GM12878 (cell line): ENCODE measurements at regions of chr6 and their contacts with region 1.

Region 1: DNA sequence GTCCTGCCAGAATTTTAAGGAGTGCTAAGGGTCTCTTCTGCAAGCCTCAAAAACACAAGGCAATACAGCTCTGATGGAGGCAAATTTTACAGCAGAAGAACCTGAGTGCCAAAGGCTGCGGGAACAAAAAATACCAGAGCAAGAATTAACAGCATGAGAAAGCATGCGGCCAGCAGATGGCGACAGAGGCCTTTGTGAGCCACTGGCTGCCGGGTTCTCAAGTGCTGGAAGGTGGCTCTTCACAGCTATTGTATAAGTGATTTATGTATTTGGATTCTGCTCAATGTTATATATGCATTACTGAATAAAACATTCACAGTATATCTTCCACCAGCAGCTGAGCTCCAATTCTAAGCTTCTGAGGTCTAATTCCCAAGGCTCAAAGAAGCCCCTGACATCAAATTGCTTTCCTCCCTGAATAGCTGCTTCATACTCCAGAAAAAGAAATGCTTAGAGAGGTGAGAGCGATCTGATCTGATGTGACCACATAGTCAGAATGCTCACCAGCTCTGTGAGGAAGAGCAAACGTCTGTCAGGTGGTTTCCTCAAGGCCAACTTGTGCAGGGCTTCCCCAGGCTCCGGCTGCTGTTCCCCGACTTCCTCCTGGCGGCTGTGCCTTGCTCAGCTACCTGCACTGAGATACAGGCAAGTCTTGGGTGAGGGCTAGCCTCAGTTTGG is 58.6 kb downstream of the PPP1R3G start:
- DNase-seq: peak; percentile 27
- ATAC-seq: peak; percentile 93
- H3K4me3 ChIP-seq: no peak overlapping the region
- H3K27ac ChIP-seq: no peak overlapping the region
- H3K4me1 ChIP-seq: peaks cover 11% of the 10 kb centered on the region
- H3K27me3 ChIP-seq: no peaks in the 10 kb centered on the region
- CTCF ChIP-seq: peak; percentile 82 to 99 (median 88); a peak in 5 of 6 replicates
- EP300 ChIP-seq: no peak
- POLR2A ChIP-seq: no peak
- RAD21 ChIP-seq: peak; percentile 98

Region 2: DNA sequence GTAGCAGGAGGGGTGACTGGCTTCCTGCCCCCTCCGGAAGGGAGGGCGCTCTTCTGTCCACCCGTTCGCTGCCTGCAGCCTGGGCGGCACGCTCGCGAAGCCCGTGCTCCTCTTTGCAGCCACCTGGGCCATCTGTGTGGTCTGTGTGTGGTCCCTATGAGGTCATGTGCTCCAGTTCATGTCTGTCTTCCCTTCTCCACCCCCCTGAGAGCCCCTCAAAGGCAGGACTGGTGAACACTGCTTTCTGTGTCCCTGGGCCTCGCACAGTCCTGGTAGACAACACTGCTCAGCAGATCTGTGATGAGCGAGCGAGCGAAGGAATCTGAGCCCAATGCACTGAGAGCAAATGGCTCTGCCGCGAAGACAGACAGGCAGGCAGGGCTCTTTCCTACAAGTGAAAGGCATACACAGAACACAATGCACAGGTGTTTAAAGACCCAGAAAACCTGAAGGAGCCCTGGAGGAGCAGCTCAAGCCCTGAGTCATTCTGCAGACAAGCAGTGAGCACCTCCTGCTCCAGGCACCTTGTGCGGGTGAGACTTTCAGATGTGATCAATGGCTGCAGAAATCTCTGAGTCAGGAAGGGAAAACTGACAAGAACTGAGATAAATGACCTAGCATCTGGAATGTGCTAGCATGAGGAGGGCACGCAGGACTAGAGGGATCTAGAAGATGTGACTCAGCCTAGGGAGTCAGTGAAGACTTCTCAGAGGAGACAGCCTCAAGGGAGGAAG is 31.5 kb before region 1 on chr6:
- CTCF ChIA-PET with region 1: no interaction called
- POLR2A ChIA-PET with region 1: no interaction called
- RAD21 ChIA-PET with region 1: no interaction called
- SMC1A ChIA-PET with region 1: no interaction called
- in situ Hi-C with region 1: no loop called
- intact Hi-C with region 1: no loop called
- DNase-seq: no peak
- ATAC-seq: no peak
- H3K4me3 ChIP-seq: no peak overlapping the region
- H3K27ac ChIP-seq: no peak overlapping the region
- H3K4me1 ChIP-seq: no peaks in the 10 kb centered on the region
- H3K27me3 ChIP-seq: no peaks in the 10 kb centered on the region
- CTCF ChIP-seq: no peak
- EP300 ChIP-seq: no peak
- POLR2A ChIP-seq: no peak
- RAD21 ChIP-seq: no peak

Region 3: GRCh38 chr6:5132731-5133341 is 10.9 kb before region 1 on chr6:
- CTCF ChIA-PET with region 1: interaction called, 16 read pairs
- POLR2A ChIA-PET with region 1: no interaction called
- RAD21 ChIA-PET with region 1: interaction called, 4 read pairs
- SMC1A ChIA-PET with region 1: interaction called, 7 read pairs
- in situ Hi-C with region 1: no loop called
- intact Hi-C with region 1: no loop called
- DNase-seq: peak; percentile 59
- ATAC-seq: peak; percentile 93
- H3K4me3 ChIP-seq: peak overlapping the region; percentile 41
- H3K27ac ChIP-seq: no peak overlapping the region
- H3K4me1 ChIP-seq: peaks cover 11% of the 10 kb centered on the region
- H3K27me3 ChIP-seq: no peaks in the 10 kb centered on the region
- CTCF ChIP-seq: peak in 2 of 3 experiments; percentile 4 to 11; a peak in 1 of 6 replicates
- EP300 ChIP-seq: no peak
- POLR2A ChIP-seq: no peak
- RAD21 ChIP-seq: no peak

Region 4: GRCh38 chr6:5179917-5180316 is 36.1 kb after region 1 on chr6:
- CTCF ChIA-PET with region 1: interaction called, 65 read pairs
- POLR2A ChIA-PET with region 1: interaction called, 4 read pairs
- RAD21 ChIA-PET with region 1: interaction called, 24 read pairs
- SMC1A ChIA-PET with region 1: interaction called, 27 read pairs
- in situ Hi-C with region 1: no loop called
- intact Hi-C with region 1: no loop called
- DNase-seq: no peak
- ATAC-seq: no peak
- H3K4me3 ChIP-seq: no peak overlapping the region
- H3K27ac ChIP-seq: no peak overlapping the region
- H3K4me1 ChIP-seq: peaks cover 16% of the 10 kb centered on the region
- H3K27me3 ChIP-seq: no peaks in the 10 kb centered on the region
- CTCF ChIP-seq: no peak
- EP300 ChIP-seq: no peak
- POLR2A ChIP-seq: no peak
- RAD21 ChIP-seq: no peak

Region 5: GRCh38 chr6:5278047-5278446 is 134.3 kb after region 1 on chr6:
- CTCF ChIA-PET with region 1: interaction called, 21 read pairs
- POLR2A ChIA-PET with region 1: no interaction called
- RAD21 ChIA-PET with region 1: interaction called, 5 read pairs
- SMC1A ChIA-PET with region 1: interaction called, 4 read pairs
- in situ Hi-C with region 1: no loop called
- intact Hi-C with region 1: no loop called
- DNase-seq: peak; percentile 60
- ATAC-seq: peak; percentile 90
- H3K4me3 ChIP-seq: no peak overlapping the region
- H3K27ac ChIP-seq: peak overlapping the region; percentile 28; the same call in 1 of the 2 replicates
- H3K4me1 ChIP-seq: peaks cover 21% of the 10 kb centered on the region
- H3K27me3 ChIP-seq: no peaks in the 10 kb centered on the region
- CTCF ChIP-seq: no peak
- EP300 ChIP-seq: peak in 1 of 2 experiments; percentile 38; a peak in 1 of 4 replicates
- POLR2A ChIP-seq: no peak
- RAD21 ChIP-seq: no peak

Region 6: GRCh38 chr6:5302995-5303622 is 159.3 kb after region 1 on chr6:
- CTCF ChIA-PET with region 1: interaction called, 198 read pairs
- POLR2A ChIA-PET with region 1: interaction called, 4 read pairs
- RAD21 ChIA-PET with region 1: interaction called, 77 read pairs
- SMC1A ChIA-PET with region 1: interaction called, 61 read pairs
- in situ Hi-C with region 1: loop called (anchors 5 kb)
- intact Hi-C with region 1: loop called (anchors 1 kb)
- DNase-seq: peak; percentile 41
- ATAC-seq: peak; percentile 93
- H3K4me3 ChIP-seq: peak overlapping the region; percentile 55
- H3K27ac ChIP-seq: peak overlapping the region; percentile 68
- H3K4me1 ChIP-seq: peaks cover 18% of the 10 kb centered on the region
- H3K27me3 ChIP-seq: no peaks in the 10 kb centered on the region
- CTCF ChIP-seq: peak; percentile 87 to 93 (median 90)
- EP300 ChIP-seq: no peak
- POLR2A ChIP-seq: no peak
- RAD21 ChIP-seq: peak; percentile 78

Region 7: GRCh38 chr6:5398530-5398929 is 254.8 kb after region 1 on chr6:
- CTCF ChIA-PET with region 1: interaction called, 34 read pairs
- POLR2A ChIA-PET with region 1: no interaction called
- RAD21 ChIA-PET with region 1: interaction called, 35 read pairs
- SMC1A ChIA-PET with region 1: interaction called, 21 read pairs
- in situ Hi-C with region 1: loop called (anchors 5 kb)
- intact Hi-C with region 1: loop called (anchors 1 kb)
- DNase-seq: no peak
- ATAC-seq: peak; percentile 92
- H3K4me3 ChIP-seq: no peak overlapping the region
- H3K27ac ChIP-seq: no peak overlapping the region
- H3K4me1 ChIP-seq: no peaks in the 10 kb centered on the region
- H3K27me3 ChIP-seq: no peaks in the 10 kb centered on the region
- CTCF ChIP-seq: peak; percentile 43 to 59 (median 49)
- EP300 ChIP-seq: no peak
- POLR2A ChIP-seq: no peak
- RAD21 ChIP-seq: peak; percentile 55

Region 8: DNA sequence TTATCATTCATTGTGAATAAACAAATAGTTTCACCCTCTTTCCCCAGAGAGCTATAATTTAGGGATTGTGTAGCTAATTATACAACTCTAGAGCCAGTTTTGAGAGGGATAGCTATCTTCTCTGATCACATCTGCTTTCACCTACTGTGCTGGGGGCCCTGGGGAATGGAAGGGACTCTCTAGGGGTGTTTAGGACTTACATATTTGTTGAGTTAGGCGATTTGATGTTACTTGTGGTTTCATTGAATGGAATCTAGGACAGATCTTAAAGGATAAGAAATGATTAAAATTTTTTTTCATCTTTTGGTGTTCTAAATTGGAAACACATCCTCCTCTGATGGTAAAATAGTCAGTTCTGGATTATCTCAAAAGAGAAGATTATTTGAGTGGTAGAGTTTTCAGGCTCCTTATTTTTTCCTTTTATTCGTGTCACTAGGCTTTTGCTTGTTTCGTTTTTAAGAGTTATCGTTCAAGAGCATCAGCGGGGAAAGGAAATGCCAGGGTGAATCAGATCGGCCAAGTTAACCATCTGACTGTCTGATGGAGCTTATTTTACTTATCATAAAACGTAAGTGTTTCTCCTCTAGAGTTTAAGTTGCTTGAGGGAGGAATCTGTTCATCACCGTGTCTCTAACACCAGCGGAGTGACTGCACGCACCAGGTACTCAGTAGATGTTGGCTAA is 354.3 kb after region 1 on chr6:
- CTCF ChIA-PET with region 1: no interaction called
- POLR2A ChIA-PET with region 1: no interaction called
- RAD21 ChIA-PET with region 1: no interaction called
- SMC1A ChIA-PET with region 1: no interaction called
- in situ Hi-C with region 1: no loop called
- intact Hi-C with region 1: no loop called
- DNase-seq: no peak
- ATAC-seq: no peak
- H3K4me3 ChIP-seq: no peak overlapping the region
- H3K27ac ChIP-seq: no peak overlapping the region
- H3K4me1 ChIP-seq: no peaks in the 10 kb centered on the region
- H3K27me3 ChIP-seq: no peaks in the 10 kb centered on the region
- CTCF ChIP-seq: no peak
- EP300 ChIP-seq: no peak
- POLR2A ChIP-seq: no peak
- RAD21 ChIP-seq: no peak